T-cell (primary cell): ENCODE measurements at regions of chr9 and their contacts with region 1.

Region 1: GRCh38 chr9:96317335-96317980 is 15.5 kb upstream of the HSD17B3 start:
- DNase-seq: peak in 31 of 35 experiments; percentile 1 to 72 (median 30)
- ATAC-seq: peak in 1 of 4 experiments; percentile 67
- H3K4me3 ChIP-seq: no peak overlapping the region
- H3K4me3 Mint-ChIP-seq: no peak overlapping the region
- H3K27ac ChIP-seq: no peak overlapping the region
- H3K27ac Mint-ChIP-seq: no peak overlapping the region
- H3K4me1 ChIP-seq: no peaks in the 10 kb centered on the region
- H3K4me1 Mint-ChIP-seq: no peaks in the 10 kb centered on the region
- H3K27me3 ChIP-seq: no peaks in the 10 kb centered on the region
- H3K27me3 Mint-ChIP-seq: no peaks in the 10 kb centered on the region

Region 2: DNA sequence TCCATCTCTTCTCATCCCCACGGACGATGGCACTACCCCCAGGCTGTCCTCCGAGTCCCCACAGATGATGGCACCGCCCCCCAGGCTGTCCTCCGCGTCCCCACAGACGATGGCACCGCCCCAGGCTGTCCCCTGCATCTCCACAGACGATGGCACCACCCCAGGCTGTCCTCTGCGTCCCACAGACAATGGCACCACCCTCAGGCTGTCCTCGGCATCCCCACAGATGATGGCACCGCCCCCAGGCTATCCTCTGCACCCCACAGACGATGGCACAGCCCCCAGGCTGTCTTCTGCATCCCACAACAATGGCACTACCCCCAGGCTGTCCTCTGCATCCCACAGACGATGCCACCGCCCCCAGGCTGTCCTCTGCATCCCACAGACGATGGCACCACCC is 743.3 kb before region 1 on chr9:
- CTCF ChIA-PET with region 1: interaction called in 1 of 2 experiments, 14 read pairs
- POLR2A ChIA-PET with region 1: no interaction called
- DNase-seq: peak in 23 of 35 experiments; percentile 3 to 46 (median 16)
- ATAC-seq: no peak
- H3K4me3 ChIP-seq: no peak overlapping the region
- H3K4me3 Mint-ChIP-seq: no peak overlapping the region
- H3K27ac ChIP-seq: no peak overlapping the region
- H3K27ac Mint-ChIP-seq: no peak overlapping the region
- H3K4me1 ChIP-seq: peaks cover 0 to 11% of the 10 kb centered on the region in 2 experiments
- H3K4me1 Mint-ChIP-seq: peaks cover 12 to 13% (median 13%) of the 10 kb centered on the region in 3 donors
- H3K27me3 ChIP-seq: peaks cover 0 to 50% of the 10 kb centered on the region in 2 experiments
- H3K27me3 Mint-ChIP-seq: peaks cover 35 to 36% of the 10 kb centered on the region in 2 donors

Region 3: GRCh38 chr9:96289392-96289791 is 28.1 kb before region 1 on chr9:
- CTCF ChIA-PET with region 1: no interaction called
- POLR2A ChIA-PET with region 1: no interaction called
- DNase-seq: no peak
- ATAC-seq: no peak
- H3K4me3 ChIP-seq: no peak overlapping the region
- H3K4me3 Mint-ChIP-seq: no peak overlapping the region
- H3K27ac ChIP-seq: no peak overlapping the region
- H3K27ac Mint-ChIP-seq: no peak overlapping the region
- H3K4me1 ChIP-seq: no peaks in the 10 kb centered on the region
- H3K4me1 Mint-ChIP-seq: no peaks in the 10 kb centered on the region
- H3K27me3 ChIP-seq: peaks cover 0 to 6% of the 10 kb centered on the region in 2 experiments
- H3K27me3 Mint-ChIP-seq: peaks cover 0 to 5% of the 10 kb centered on the region in 2 donors